A673 (cell line): ENCODE measurements at regions of chr5 and their contacts with region 1.

Region 1: GRCh38 chr5:42908509-42909488 is 97.1 kb upstream of the SELENOP start:
- DNase-seq: peak; percentile 90
- H3K4me3 ChIP-seq: peak overlapping the region; percentile 45
- H3K27ac ChIP-seq: no peak overlapping the region
- H3K4me1 ChIP-seq: peaks cover 3% of the 10 kb centered on the region
- H3K27me3 ChIP-seq: peaks cover 15% of the 10 kb centered on the region
- CTCF ChIP-seq: peak; percentile 87

Region 2: DNA sequence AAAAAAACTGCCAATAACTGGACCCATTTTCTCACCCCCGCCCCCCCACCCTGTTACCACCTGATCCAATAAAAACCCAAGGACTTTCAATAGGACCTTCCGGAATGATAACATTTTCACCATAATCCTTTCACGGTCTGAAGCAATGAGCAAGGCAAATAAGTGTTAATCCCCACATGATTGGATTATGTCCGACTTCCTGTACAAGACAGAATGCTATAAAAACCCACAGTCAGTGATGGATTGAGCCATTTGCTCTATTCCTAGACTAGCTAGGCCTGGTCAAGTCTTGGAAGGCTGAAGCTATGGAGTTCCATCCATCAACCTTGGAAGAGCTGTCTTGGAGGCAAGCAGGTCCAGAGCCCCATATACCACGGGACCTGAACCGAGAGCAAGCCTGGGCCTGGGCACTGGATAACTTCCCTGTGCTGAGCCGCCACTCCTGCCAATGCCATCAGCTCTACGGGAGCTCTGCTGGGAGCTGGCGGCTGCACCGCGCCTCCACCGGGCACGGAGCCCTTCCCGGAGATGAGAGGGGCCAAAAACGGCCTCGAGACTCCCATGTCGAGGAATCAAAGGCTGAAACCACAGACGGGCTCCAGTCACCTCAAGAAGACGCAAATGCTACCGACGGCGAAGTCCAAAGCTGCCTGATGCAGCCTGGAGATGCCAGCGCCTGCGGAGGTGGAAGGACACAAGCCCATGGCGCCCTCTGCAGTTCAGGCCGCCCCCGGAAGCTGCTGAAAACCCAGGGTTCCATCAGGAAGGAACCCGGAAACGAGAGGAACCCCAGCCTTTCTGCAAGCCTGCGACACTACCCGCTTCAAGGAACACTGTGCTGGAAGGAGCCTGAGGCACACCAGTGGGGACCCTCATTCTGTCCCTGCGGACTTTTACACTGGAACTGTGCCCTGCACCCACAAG is 62.1 kb after region 1 on chr5:
- CTCF ChIA-PET with region 1: interaction called, 11 read pairs
- POLR2A ChIA-PET with region 1: interaction called, 9 read pairs
- intact Hi-C with region 1: no loop called
- DNase-seq: peak; percentile 92
- H3K4me3 ChIP-seq: no peak overlapping the region
- H3K27ac ChIP-seq: peak overlapping the region; percentile 59
- H3K4me1 ChIP-seq: peaks cover 37% of the 10 kb centered on the region
- H3K27me3 ChIP-seq: no peaks in the 10 kb centered on the region
- CTCF ChIP-seq: peak; percentile 45

Region 3: GRCh38 chr5:43019614-43020293 is 111.0 kb after region 1 on chr5:
- CTCF ChIA-PET with region 1: interaction called, 6 read pairs
- POLR2A ChIA-PET with region 1: no interaction called
- intact Hi-C with region 1: loop called (anchors 2 kb)
- DNase-seq: peak; percentile 89
- H3K4me3 ChIP-seq: peak overlapping the region; percentile 81
- H3K27ac ChIP-seq: peak overlapping the region; percentile 31
- H3K4me1 ChIP-seq: peaks cover 16% of the 10 kb centered on the region
- H3K27me3 ChIP-seq: no peaks in the 10 kb centered on the region
- CTCF ChIP-seq: peak; percentile 52

Region 4: DNA sequence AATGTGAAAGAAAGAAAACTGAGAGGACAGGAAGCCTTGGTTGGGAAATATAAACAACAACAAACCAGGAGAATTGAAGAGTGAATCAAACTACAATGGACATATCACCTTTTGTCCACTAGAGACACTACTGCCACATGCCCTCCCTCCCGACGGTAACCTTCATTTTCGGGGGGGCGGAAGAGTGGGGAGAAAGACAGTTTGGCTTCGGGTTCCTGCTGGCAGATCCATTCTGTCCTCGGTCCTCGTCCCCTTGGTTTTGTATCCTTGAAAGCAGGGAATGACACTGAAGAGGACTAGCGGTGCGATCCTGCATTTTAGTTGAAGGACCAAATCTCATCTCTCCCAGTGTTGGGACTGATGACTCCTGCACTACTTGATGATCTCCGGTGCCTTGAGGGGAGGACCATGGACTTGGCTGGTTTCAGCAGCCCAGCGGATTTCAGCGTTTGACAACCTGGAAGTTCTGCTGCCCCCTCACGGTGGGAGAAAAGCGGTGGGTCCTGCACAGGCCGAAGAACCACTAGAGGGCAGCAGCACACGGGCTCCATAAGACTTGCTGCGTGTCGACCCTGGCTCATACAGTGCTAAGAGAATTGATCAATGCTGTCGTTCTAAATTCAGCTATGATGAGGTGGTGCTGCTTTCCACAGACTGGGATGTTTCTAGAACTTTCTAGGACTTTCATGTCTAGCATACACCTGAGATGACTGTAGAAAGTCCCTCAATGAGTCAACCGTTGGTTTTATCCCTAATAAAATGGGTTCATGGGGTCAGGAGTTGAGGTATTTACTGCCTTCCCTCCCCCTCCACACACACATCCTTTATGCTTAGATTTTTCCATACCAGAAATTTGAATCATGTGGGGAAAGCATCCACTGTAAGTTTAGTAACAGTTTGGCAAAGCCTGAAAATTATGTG is 196.8 kb after region 1 on chr5:
- CTCF ChIA-PET with region 1: no interaction called
- POLR2A ChIA-PET with region 1: no interaction called
- intact Hi-C with region 1: loop called (anchors 1 kb)
- DNase-seq: peak; percentile 97
- H3K4me3 ChIP-seq: peak overlapping the region; percentile 41
- H3K27ac ChIP-seq: no peak overlapping the region
- H3K4me1 ChIP-seq: no peaks in the 10 kb centered on the region
- H3K27me3 ChIP-seq: no peaks in the 10 kb centered on the region
- CTCF ChIP-seq: peak; percentile 100

Region 5: GRCh38 chr5:43389679-43390329 is 481.0 kb after region 1 on chr5:
- CTCF ChIA-PET with region 1: interaction called, 7 read pairs
- POLR2A ChIA-PET with region 1: no interaction called
- intact Hi-C with region 1: loop called (anchors 5 kb)
- DNase-seq: peak; percentile 92
- H3K4me3 ChIP-seq: no peak overlapping the region
- H3K27ac ChIP-seq: no peak overlapping the region
- H3K4me1 ChIP-seq: no peaks in the 10 kb centered on the region
- H3K27me3 ChIP-seq: no peaks in the 10 kb centered on the region
- CTCF ChIP-seq: peak; percentile 96